ENCODE measurements at regions of chr1 and their contacts with region 1.

Region 1: DNA sequence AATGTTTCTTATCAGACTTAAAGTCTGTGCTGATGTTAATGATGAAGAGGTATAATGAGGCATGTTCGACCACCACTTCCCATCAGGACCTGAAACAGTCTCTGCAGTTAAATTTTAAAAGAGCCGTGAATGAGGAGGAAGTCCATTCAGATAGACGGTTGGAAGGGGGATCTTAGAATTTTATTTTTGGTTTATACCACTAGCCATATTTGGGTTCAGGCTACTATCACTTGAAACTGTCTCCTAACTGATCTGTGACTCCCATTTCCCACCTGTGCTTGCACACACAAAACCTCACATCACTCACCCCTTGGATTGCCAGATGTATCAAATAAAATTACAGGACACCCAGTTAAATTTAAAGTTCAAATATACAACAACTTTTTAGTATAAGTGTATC is 9.9 kb upstream of the ANKRD13C start:
- DNase-seq: no peak
- ATAC-seq: peak; percentile 44
- H3K4me3 ChIP-seq: no peak overlapping the region
- H3K27ac ChIP-seq: no peak overlapping the region
- H3K4me1 ChIP-seq: peaks cover 2% of the 10 kb centered on the region; the same call in 1 of the 2 replicates
- H3K27me3 ChIP-seq: no peaks in the 10 kb centered on the region
- CTCF ChIP-seq: no peak
- EP300 ChIP-seq: peak in 1 of 2 experiments; percentile 50; a peak in 1 of 4 replicates
- POLR2A ChIP-seq: no peak
- RAD21 ChIP-seq: no peak

Region 2: GRCh38 chr1:70331962-70332361 is 32.5 kb before region 1 on chr1:
- CTCF ChIA-PET with region 1: no interaction called
- POLR2A ChIA-PET with region 1: no interaction called
- RAD21 ChIA-PET with region 1: no interaction called
- SMC1A ChIA-PET with region 1: no interaction called
- in situ Hi-C with region 1: no loop called
- intact Hi-C with region 1: no loop called
- DNase-seq: no peak
- ATAC-seq: no peak
- H3K4me3 ChIP-seq: no peak overlapping the region
- H3K27ac ChIP-seq: no peak overlapping the region
- H3K4me1 ChIP-seq: no peaks in the 10 kb centered on the region
- H3K27me3 ChIP-seq: no peaks in the 10 kb centered on the region
- CTCF ChIP-seq: no peak
- EP300 ChIP-seq: no peak
- POLR2A ChIP-seq: no peak
- RAD21 ChIP-seq: no peak

Region 3: GRCh38 chr1:70382682-70383081 is 18.2 kb after region 1 on chr1:
- CTCF ChIA-PET with region 1: no interaction called
- POLR2A ChIA-PET with region 1: no interaction called
- RAD21 ChIA-PET with region 1: no interaction called
- SMC1A ChIA-PET with region 1: no interaction called
- in situ Hi-C with region 1: no loop called
- intact Hi-C with region 1: loop called (anchors 2 kb)
- DNase-seq: no peak
- ATAC-seq: peak; percentile 87
- H3K4me3 ChIP-seq: no peak overlapping the region
- H3K27ac ChIP-seq: no peak overlapping the region
- H3K4me1 ChIP-seq: no peaks in the 10 kb centered on the region
- H3K27me3 ChIP-seq: no peaks in the 10 kb centered on the region
- CTCF ChIP-seq: no peak
- EP300 ChIP-seq: peak in 1 of 2 experiments; percentile 47; a peak in 1 of 4 replicates
- POLR2A ChIP-seq: no peak
- RAD21 ChIP-seq: no peak